Calu3 (cell line): ENCODE measurements at regions of chr18 and their contacts with region 1.

Region 1: DNA sequence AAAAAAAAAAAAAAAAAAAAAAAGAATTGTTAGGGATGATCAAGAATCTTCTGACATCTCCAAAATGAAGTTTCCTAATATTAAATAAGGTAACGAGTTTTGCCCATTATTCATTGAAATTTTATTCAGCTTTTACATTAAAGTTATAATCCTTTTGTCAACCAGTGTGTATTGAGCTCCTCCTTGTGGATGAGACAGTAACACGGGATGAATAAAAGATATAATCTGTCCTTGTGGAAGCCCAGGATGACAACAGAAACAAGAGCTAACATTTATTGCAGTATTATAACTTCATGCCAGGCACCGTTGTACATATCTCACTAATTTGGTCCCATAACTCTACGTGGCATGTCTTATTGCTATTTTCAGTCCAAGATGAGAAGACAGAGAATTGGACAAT is 33.4 kb upstream of the SERPINB7 start:
- DNase-seq: no peak
- H3K4me3 Mint-ChIP-seq: no peak overlapping the region
- H3K27ac Mint-ChIP-seq: no peak overlapping the region
- H3K4me1 Mint-ChIP-seq: peaks cover 35% of the 10 kb centered on the region
- H3K27me3 Mint-ChIP-seq: no peaks in the 10 kb centered on the region
- CTCF ChIP-seq: peak; percentile 36

Region 2: DNA sequence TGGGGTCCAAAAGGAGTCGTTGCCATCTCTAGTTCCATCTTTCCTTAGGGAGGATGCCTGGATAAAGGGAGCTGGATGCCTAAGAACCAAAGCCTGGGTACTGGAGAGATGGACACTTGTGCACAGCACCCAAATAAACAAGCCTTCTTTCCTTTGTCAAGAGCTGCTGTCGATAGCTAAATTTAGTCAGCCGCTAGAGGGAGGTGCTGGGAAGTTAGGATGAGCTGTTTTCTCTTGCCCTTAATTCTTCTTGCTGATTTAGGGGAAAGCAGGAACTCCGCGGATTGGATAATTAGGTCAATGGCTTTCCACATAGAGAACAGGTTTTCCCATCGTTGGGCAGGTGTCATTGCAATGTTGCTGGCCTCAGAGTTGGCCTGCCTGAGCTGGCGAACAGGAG is 230.5 kb before region 1 on chr18:
- CTCF ChIA-PET with region 1: interaction called, 23 read pairs
- intact Hi-C with region 1: no loop called
- DNase-seq: peak; percentile 61
- H3K4me3 Mint-ChIP-seq: no peak overlapping the region
- H3K27ac Mint-ChIP-seq: no peak overlapping the region
- H3K4me1 Mint-ChIP-seq: no peaks in the 10 kb centered on the region
- H3K27me3 Mint-ChIP-seq: no peaks in the 10 kb centered on the region
- CTCF ChIP-seq: peak; percentile 69

Region 3: DNA sequence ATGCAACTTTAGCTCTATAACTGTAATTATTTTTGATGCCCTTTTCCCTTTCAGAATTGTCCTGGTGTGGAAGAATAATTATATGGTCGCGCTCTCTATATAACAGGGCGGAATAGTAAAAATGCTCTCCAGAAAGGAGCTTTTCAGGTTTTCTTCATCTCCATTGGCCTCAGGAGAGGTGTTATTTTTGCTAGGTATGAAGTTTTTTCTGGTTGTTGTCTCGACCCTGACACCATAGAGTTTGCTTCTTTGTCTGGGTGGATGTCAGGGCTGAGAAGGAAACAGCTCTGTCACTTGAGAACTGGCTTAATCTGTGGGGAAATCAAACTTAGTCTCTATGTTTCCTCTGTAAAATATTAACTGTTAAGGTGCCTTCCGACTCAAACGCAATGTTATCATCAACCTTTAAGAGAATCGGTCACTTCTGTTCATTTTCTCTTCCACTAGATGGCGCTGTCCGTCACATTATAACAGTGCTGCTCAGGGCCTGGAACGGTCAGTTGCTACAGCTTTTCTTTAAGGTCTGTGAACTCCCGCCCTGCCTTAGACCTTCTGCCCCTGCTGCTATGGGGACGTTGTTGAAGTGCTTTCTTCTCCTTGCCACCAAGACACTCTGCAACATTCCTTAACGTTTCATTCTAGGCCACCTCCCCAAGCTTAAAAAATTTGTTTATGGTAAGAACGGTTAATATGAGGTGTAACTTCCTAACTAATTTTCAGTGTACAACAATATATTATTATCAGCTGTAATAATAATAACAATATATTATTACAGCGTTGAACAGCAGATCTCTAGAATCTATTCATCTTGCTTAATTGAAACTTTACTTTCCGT is 223.4 kb before region 1 on chr18:
- CTCF ChIA-PET with region 1: interaction called, 62 read pairs
- intact Hi-C with region 1: loop called (anchors 1 kb)
- DNase-seq: peak; percentile 69
- H3K4me3 Mint-ChIP-seq: no peak overlapping the region
- H3K27ac Mint-ChIP-seq: no peak overlapping the region
- H3K4me1 Mint-ChIP-seq: peaks cover 15% of the 10 kb centered on the region
- H3K27me3 Mint-ChIP-seq: no peaks in the 10 kb centered on the region
- CTCF ChIP-seq: peak; percentile 57

Region 4: GRCh38 chr18:63578357-63578958 is 163.3 kb before region 1 on chr18:
- CTCF ChIA-PET with region 1: interaction called, 7 read pairs
- intact Hi-C with region 1: loop called (anchors 2 kb)
- DNase-seq: peak; percentile 58
- H3K4me3 Mint-ChIP-seq: no peak overlapping the region
- H3K27ac Mint-ChIP-seq: no peak overlapping the region
- H3K4me1 Mint-ChIP-seq: no peaks in the 10 kb centered on the region
- H3K27me3 Mint-ChIP-seq: no peaks in the 10 kb centered on the region
- CTCF ChIP-seq: peak; percentile 74

Region 5: DNA sequence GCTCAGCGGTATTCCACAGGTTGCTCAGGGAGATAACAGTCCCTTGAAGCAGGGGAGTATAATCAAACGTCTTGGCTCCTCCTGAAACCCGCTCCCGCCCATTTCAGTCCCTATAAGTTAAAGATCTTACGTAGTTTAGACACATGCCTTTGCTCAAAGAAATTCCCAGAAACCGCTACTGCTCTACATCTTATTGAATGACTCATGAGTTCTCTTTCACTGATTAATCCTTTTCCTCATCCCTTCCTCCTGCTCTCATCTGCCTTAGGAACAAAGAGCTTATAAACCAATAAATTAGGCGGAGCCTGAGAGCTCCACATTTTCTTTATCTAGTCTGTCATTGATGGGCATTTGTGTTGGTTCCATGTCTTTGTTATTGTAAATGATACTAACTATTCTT is 93.5 kb before region 1 on chr18:
- CTCF ChIA-PET with region 1: interaction called, 12 read pairs
- intact Hi-C with region 1: no loop called
- DNase-seq: no peak
- H3K4me3 Mint-ChIP-seq: no peak overlapping the region
- H3K27ac Mint-ChIP-seq: no peak overlapping the region
- H3K4me1 Mint-ChIP-seq: peaks cover 14% of the 10 kb centered on the region
- H3K27me3 Mint-ChIP-seq: no peaks in the 10 kb centered on the region
- CTCF ChIP-seq: no peak

Region 6: GRCh38 chr18:63683152-63683551 is 58.6 kb before region 1 on chr18:
- CTCF ChIA-PET with region 1: interaction called, 12 read pairs
- intact Hi-C with region 1: loop called (anchors 2 kb)
- DNase-seq: peak; percentile 77
- H3K4me3 Mint-ChIP-seq: peak overlapping the region; percentile 22
- H3K27ac Mint-ChIP-seq: peak overlapping the region; percentile 91
- H3K4me1 Mint-ChIP-seq: peaks cover 43% of the 10 kb centered on the region
- H3K27me3 Mint-ChIP-seq: no peaks in the 10 kb centered on the region
- CTCF ChIP-seq: no peak

Region 7: GRCh38 chr18:63725682-63726480 is 15.9 kb before region 1 on chr18:
- CTCF ChIA-PET with region 1: interaction called, 11 read pairs
- intact Hi-C with region 1: no loop called
- DNase-seq: no peak
- H3K4me3 Mint-ChIP-seq: no peak overlapping the region
- H3K27ac Mint-ChIP-seq: no peak overlapping the region
- H3K4me1 Mint-ChIP-seq: no peaks in the 10 kb centered on the region
- H3K27me3 Mint-ChIP-seq: no peaks in the 10 kb centered on the region
- CTCF ChIP-seq: no peak

Region 8: GRCh38 chr18:64119916-64120315 is 378.1 kb after region 1 on chr18:
- CTCF ChIA-PET with region 1: no interaction called
- intact Hi-C with region 1: no loop called
- DNase-seq: no peak
- H3K4me3 Mint-ChIP-seq: no peak overlapping the region
- H3K27ac Mint-ChIP-seq: no peak overlapping the region
- H3K4me1 Mint-ChIP-seq: no peaks in the 10 kb centered on the region
- H3K27me3 Mint-ChIP-seq: no peaks in the 10 kb centered on the region
- CTCF ChIP-seq: peak; percentile 33